Astrocyte of the cerebellum (primary cell): ENCODE measurements at regions of chr15 and their contacts with region 1.

Region 1: GRCh38 chr15:75895731-75896130 is 7.9 kb upstream of the FBXO22 start:
- DNase-seq: no peak
- H3K4me3 ChIP-seq: no peak overlapping the region
- CTCF ChIP-seq: no peak

Region 2: GRCh38 chr15:75947092-75947491 is 51.4 kb after region 1 on chr15:
- in situ Hi-C with region 1: loop called (anchors 5 kb)
- DNase-seq: no peak
- H3K4me3 ChIP-seq: no peak overlapping the region
- CTCF ChIP-seq: no peak

Region 3: GRCh38 chr15:75961338-75961737 is 65.6 kb after region 1 on chr15:
- in situ Hi-C with region 1: no loop called
- DNase-seq: no peak
- H3K4me3 ChIP-seq: no peak overlapping the region
- CTCF ChIP-seq: no peak